Activated B cell treated with CpG ODN at 0.5 μM for 24 hours (primary cell): ENCODE measurements at regions of chr12 and their contacts with region 1.

Region 1: GRCh38 chr12:123232807-123233543 is at the starts of genes MPHOSPH9 and MTRFR:
- DNase-seq: peak; percentile 96
- ATAC-seq: peak; percentile 90
- H3K4me3 Mint-ChIP-seq: peak within 1 kb of the TSS; percentile 98
- H3K27ac Mint-ChIP-seq: peak within 1 kb of the TSS; percentile 98
- H3K4me1 Mint-ChIP-seq: peaks cover 73% of the 10 kb centered on the region
- H3K27me3 Mint-ChIP-seq: peaks cover 3% of the 10 kb centered on the region
- CTCF ChIP-seq: no peak
- total RNA-seq, gene MPHOSPH9: 37.3 and 47.2 TPM in 2 replicates
- total RNA-seq, gene MTRFR: 23.5 and 23.6 TPM in 2 replicates

Region 2: DNA sequence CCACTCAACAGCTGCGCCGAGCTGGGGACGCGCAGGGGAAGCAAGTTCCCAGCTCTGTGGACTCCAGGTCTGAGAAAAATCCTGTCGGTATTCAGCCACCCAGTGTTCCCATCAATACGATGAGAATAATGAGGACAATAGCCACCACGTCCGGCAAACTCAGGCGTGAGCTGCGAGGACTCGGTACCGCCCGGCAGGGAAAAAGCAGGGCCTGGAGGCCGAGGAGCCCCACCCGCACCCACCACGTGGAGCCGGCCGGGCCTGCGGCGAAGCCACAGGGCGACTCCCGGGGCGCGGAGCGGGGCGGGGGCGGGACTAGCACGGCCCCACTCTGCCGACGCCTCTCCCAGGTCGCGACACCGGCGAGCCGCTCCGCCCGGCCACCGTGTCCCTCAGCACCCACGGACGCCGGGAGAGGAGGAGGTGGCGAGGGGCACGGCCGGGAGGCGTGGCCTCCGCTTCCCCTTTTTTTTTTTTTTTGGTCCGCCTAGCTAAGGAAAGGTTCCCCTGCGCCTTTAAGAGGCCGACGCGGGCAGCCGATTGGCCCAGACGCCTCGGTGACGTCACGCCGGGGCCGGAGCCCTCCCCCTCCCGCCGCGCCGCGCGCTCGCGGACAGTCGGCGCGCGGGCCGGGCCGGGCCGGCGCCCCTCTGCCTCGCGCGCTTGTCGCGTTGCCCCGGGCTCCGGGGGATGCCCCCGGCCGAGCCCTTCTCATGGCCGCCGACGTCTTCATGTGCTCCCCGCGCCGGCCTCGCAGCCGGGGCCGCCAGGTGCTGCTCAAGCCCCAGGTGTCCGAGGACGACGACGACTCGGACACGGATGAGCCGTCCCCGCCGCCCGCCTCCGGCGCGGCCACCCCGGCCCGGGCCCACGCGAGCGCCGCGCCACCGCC is 1154.6 kb before region 1 on chr12 and contains the start of gene MLXIP:
- CTCF ChIA-PET with region 1: no interaction called
- POLR2A ChIA-PET with region 1: no interaction called
- intact Hi-C with region 1: loop called (anchors 5 kb)
- DNase-seq: peak; percentile 89
- ATAC-seq: peak; percentile 80
- H3K4me3 Mint-ChIP-seq: peak within 1 kb of the TSS; percentile 86
- H3K27ac Mint-ChIP-seq: peak within 1 kb of the TSS; percentile 74
- H3K4me1 Mint-ChIP-seq: peaks cover 66% of the 10 kb centered on the region
- H3K27me3 Mint-ChIP-seq: no peaks in the 10 kb centered on the region
- CTCF ChIP-seq: no peak
- total RNA-seq, gene MLXIP: 26.7 and 33.7 TPM in 2 replicates

Region 3: DNA sequence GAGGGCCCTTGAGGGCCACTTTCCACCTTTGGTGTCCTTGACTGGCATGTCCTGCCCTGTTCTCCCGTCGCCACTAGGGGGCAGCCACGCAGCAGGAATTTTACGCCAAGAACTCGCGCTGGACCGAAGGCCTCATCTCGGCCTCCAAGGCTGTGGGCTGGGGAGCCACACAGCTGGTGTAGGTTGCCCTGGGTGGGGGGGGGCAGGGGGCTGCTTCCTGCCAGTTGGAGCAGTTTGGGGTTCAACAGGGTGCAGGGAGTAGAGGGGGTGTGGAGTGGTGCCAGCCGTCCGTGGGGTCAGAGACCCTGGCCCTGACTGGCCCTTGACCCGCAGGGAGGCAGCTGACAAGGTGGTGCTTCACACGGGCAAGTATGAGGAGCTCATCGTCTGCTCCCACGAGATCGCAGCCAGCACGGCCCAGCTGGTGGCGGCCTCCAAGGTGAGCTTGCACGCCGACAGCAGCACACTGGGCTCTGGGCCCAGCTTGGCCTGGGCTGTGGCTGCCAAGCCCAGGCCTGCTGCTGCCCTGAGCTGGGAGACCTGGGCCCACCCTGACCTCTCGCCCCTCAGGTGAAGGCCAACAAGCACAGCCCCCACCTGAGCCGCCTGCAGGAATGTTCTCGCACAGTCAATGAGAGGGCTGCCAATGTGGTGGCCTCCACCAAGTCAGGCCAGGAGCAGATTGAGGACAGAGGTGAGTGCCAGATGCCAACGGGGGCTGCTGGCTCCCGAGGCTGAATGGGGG is 372.5 kb before region 1 on chr12:
- CTCF ChIA-PET with region 1: interaction called, 7 read pairs
- POLR2A ChIA-PET with region 1: interaction called, 8 read pairs
- intact Hi-C with region 1: loop called (anchors 1 kb)
- DNase-seq: peak; percentile 76
- ATAC-seq: peak; percentile 72
- H3K4me3 Mint-ChIP-seq: no peak overlapping the region
- H3K27ac Mint-ChIP-seq: no peak overlapping the region
- H3K4me1 Mint-ChIP-seq: peaks cover 49% of the 10 kb centered on the region
- H3K27me3 Mint-ChIP-seq: no peaks in the 10 kb centered on the region
- CTCF ChIP-seq: peak; percentile 72

Region 4: DNA sequence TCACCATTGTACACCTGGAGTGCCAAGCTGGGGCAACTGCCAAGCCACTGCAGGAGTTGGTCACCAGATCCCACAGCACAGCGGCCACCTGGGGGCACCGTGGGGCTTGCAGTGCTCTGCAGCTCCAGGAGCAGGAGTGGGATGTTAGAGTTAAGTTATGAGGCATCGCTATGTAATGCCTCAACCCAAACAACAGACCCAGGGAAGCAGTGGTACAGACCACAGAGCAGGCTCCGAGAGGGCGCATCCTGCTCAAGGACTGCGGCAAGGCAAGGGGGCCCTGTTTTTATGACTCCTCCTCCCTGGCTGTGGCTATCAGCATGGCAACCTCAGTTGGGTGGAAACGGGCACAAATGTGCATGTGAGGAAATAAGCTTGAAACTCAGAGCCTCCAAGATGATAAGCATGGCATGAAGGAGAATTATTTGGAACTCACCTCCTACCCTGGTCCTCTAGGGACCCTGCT is 189.4 kb before region 1 on chr12:
- CTCF ChIA-PET with region 1: interaction called, 106 read pairs
- POLR2A ChIA-PET with region 1: interaction called, 19 read pairs
- intact Hi-C with region 1: loop called (anchors 1 kb)
- DNase-seq: peak; percentile 51
- ATAC-seq: peak; percentile 97
- H3K4me3 Mint-ChIP-seq: no peak overlapping the region
- H3K27ac Mint-ChIP-seq: no peak overlapping the region
- H3K4me1 Mint-ChIP-seq: peaks cover 16% of the 10 kb centered on the region
- H3K27me3 Mint-ChIP-seq: no peaks in the 10 kb centered on the region
- CTCF ChIP-seq: no peak

Region 5: GRCh38 chr12:123150744-123151456 is 82.1 kb before region 1 on chr12 and contains the start of gene PITPNM2:
- CTCF ChIA-PET with region 1: interaction called, 8 read pairs
- POLR2A ChIA-PET with region 1: interaction called, 10 read pairs
- intact Hi-C with region 1: loop called (anchors 2 kb)
- DNase-seq: peak; percentile 68
- ATAC-seq: peak; percentile 87
- H3K4me3 Mint-ChIP-seq: peak within 1 kb of the TSS; percentile 81
- H3K27ac Mint-ChIP-seq: peak within 1 kb of the TSS; percentile 65
- H3K4me1 Mint-ChIP-seq: peaks cover 31% of the 10 kb centered on the region
- H3K27me3 Mint-ChIP-seq: no peaks in the 10 kb centered on the region
- CTCF ChIP-seq: no peak
- total RNA-seq, gene PITPNM2: 12.9 and 13.7 TPM in 2 replicates

Region 6: GRCh38 chr12:123445388-123446351 is 212.7 kb after region 1 on chr12:
- CTCF ChIA-PET with region 1: no interaction called
- POLR2A ChIA-PET with region 1: interaction called, 14 read pairs
- intact Hi-C with region 1: no loop called
- DNase-seq: no peak
- ATAC-seq: peak; percentile 53
- H3K4me3 Mint-ChIP-seq: peak overlapping the region; percentile 75
- H3K27ac Mint-ChIP-seq: peak overlapping the region; percentile 93
- H3K4me1 Mint-ChIP-seq: peaks cover 59% of the 10 kb centered on the region
- H3K27me3 Mint-ChIP-seq: no peaks in the 10 kb centered on the region
- CTCF ChIP-seq: no peak